A549 (cell line): ENCODE measurements at regions of chr1 and their contacts with region 1.

Region 1: DNA sequence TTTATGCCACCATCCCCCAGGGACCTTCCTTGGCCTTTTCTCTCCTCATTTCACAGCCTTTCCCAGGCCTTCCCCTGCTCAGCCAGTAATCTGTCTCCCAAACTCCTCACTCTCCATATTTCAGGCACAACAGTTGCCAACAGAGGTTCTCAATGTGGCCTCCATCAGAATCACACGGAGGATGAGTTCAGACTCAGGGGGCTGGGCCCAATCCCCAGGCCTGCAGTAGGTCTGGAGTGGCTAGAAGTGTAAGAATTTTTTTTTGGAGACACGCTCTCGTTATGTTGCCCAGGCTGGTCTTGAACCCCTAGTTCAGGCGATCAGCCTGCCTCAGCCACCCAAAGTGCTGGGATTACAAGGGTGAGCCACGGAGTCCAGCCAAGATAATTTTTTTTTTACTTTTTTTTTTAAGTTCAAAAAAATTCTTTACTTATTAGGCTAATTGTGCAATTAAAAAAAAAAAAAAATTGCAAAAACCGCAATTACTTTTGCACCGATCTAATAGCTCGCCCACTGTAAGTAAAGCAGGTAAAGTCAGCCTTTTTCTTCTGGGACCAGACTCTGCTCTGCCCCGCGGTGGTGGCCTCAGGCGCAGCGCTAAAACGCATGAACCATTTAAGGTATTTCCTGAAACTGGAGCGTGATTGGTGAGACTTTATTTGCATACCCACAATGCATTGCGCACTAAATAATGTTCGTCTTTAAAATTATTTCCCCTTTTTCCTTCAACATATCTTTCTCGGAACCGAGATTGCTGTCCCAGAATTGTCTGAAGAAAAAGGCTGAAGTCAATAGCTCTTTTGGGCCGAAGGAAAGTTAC is 18.7 kb downstream of the KIAA2013 start:
- DNase-seq: peak; percentile 79 to 94
- ATAC-seq: peak; percentile 69 to 76
- H3K4me3 ChIP-seq: peak overlapping the region; percentile 60; the same call in 1 of the 3 replicates
- H3K27ac ChIP-seq: peak overlapping the region; percentile 96 to 99
- H3K4me1 ChIP-seq: peaks cover 4% of the 10 kb centered on the region; the same call in 1 of the 3 replicates
- CTCF ChIP-seq: 0 out of 3 replicates have a peak, but pooled peaks have one; percentile 13
- EP300 ChIP-seq: no peak
- POLR2A ChIP-seq: no peak
- RAD21 ChIP-seq: peak in 1 of 2 experiments; percentile 18; a peak in 1 of 5 replicates

Region 2: GRCh38 chr1:11037740-11038182 is 869.7 kb before region 1 on chr1:
- CTCF ChIA-PET with region 1: no interaction called
- POLR2A ChIA-PET with region 1: interaction called, 13 read pairs
- DNase-seq: peak; percentile 74 to 78
- ATAC-seq: peak; percentile 90 to 95
- H3K4me3 ChIP-seq: no peak overlapping the region
- H3K27ac ChIP-seq: no peak overlapping the region
- H3K4me1 ChIP-seq: no peaks in the 10 kb centered on the region
- CTCF ChIP-seq: peak; percentile 86
- EP300 ChIP-seq: no peak
- POLR2A ChIP-seq: no peak
- RAD21 ChIP-seq: peak; percentile 90 to 96

Region 3: DNA sequence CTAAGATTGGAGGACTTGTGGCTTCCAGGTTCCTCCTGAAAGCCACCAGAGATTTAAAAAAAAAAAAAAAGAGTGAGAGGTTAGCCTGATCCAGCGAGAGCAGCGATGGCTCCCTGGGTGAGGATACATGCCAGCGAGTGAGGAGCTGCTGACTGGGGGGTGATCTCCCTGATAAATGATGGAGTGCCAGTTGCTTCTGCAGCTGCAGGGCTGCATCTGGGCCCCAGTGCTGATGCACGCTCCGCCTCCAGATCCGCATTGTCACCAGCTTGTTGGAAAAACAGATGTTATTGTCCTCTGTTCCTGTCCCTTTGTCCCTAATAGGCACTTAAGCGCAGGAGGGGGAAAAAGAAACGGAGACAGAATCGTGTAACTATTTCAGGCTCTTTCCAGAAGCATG is 605.9 kb before region 1 on chr1:
- CTCF ChIA-PET with region 1: no interaction called
- POLR2A ChIA-PET with region 1: no interaction called
- DNase-seq: no peak
- ATAC-seq: no peak
- H3K4me3 ChIP-seq: no peak overlapping the region
- H3K27ac ChIP-seq: no peak overlapping the region
- H3K4me1 ChIP-seq: no peaks in the 10 kb centered on the region
- CTCF ChIP-seq: no peak
- EP300 ChIP-seq: no peak
- POLR2A ChIP-seq: no peak
- RAD21 ChIP-seq: no peak

Region 4: DNA sequence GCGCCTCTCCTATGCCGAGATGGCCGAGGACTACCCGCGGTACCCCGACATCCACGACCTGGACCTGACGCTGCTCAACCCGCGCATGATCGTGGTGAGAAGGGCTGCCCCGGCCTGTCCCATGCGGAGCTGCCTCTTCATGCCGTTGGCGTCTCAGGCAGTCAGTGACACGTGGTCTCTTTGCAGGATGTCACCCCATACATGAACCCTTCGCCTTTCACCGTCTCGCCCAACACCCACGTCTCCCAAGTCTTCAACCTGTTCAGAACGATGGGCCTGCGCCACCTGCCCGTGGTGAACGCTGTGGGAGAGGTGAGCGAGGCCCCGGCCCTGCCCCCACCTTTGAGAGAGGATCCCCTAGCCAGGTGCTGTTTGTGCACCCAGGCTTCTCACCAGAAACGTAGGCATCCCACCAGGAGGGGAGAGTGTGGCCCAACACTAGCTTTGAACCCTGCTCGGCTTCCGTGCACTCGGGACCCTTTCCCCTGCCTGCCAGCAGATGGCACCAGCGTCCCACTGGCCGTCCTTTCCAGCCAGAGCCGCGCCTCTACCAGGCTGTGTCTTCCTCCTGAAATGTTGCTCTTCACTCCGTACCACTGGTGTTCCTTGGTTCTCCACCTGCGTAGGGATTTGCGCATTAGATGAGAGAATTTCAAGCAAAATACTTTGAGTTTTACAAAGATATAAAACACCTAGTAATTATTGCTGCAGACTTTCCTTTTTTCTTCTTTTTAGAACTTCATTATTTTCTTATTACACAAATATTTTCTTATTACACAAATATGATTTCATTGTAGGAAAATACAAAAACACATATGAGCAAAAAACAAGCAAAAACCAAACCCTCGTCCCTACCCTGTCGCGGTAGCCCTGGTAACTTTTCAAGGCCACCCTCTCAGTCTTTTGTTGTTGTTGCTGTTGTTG is 68.9 kb before region 1 on chr1:
- CTCF ChIA-PET with region 1: interaction called, 6 read pairs
- POLR2A ChIA-PET with region 1: interaction called, 16 read pairs
- DNase-seq: peak; percentile 49 to 83
- ATAC-seq: peak; percentile 84 to 96
- H3K4me3 ChIP-seq: no peak overlapping the region
- H3K27ac ChIP-seq: no peak overlapping the region
- H3K4me1 ChIP-seq: no peaks in the 10 kb centered on the region
- CTCF ChIP-seq: peak; percentile 79
- EP300 ChIP-seq: no peak
- POLR2A ChIP-seq: no peak
- RAD21 ChIP-seq: peak; percentile 81 to 86

Region 5: GRCh38 chr1:11925938-11926292 is 18.4 kb after region 1 on chr1:
- CTCF ChIA-PET with region 1: no interaction called
- POLR2A ChIA-PET with region 1: interaction called, 66 read pairs
- DNase-seq: no peak
- ATAC-seq: peak; percentile 10 to 54; a peak in 5 of 6 replicates
- H3K4me3 ChIP-seq: peak overlapping the region; percentile 79
- H3K27ac ChIP-seq: peak overlapping the region; percentile 81 to 99
- H3K4me1 ChIP-seq: peaks cover 21% of the 10 kb centered on the region
- CTCF ChIP-seq: no peak
- EP300 ChIP-seq: no peak
- POLR2A ChIP-seq: no peak
- RAD21 ChIP-seq: no peak

Region 6: GRCh38 chr1:11967028-11967547 is 59.6 kb after region 1 on chr1:
- CTCF ChIA-PET with region 1: interaction called, 19 read pairs
- POLR2A ChIA-PET with region 1: interaction called, 80 read pairs
- DNase-seq: peak; percentile 54 to 82
- ATAC-seq: peak; percentile 92 to 95
- H3K4me3 ChIP-seq: no peak overlapping the region
- H3K27ac ChIP-seq: no peak overlapping the region
- H3K4me1 ChIP-seq: no peaks in the 10 kb centered on the region
- CTCF ChIP-seq: peak; percentile 47
- EP300 ChIP-seq: no peak
- POLR2A ChIP-seq: no peak
- RAD21 ChIP-seq: peak; percentile 63 to 70

Region 7: GRCh38 chr1:12019858-12020509 is 112.5 kb after region 1 on chr1:
- CTCF ChIA-PET with region 1: no interaction called
- POLR2A ChIA-PET with region 1: interaction called, 16 read pairs
- DNase-seq: peak in 1 of 2 experiments; percentile 20
- ATAC-seq: peak; percentile 34 to 44; a peak in 5 of 6 replicates
- H3K4me3 ChIP-seq: peak overlapping the region; percentile 99
- H3K27ac ChIP-seq: peak overlapping the region; percentile 93 to 94
- H3K4me1 ChIP-seq: no peaks in the 10 kb centered on the region
- CTCF ChIP-seq: no peak
- EP300 ChIP-seq: no peak
- POLR2A ChIP-seq: no peak
- RAD21 ChIP-seq: no peak